ENCODE measurements at regions of chr2 and their contacts with region 1.

Region 1: DNA sequence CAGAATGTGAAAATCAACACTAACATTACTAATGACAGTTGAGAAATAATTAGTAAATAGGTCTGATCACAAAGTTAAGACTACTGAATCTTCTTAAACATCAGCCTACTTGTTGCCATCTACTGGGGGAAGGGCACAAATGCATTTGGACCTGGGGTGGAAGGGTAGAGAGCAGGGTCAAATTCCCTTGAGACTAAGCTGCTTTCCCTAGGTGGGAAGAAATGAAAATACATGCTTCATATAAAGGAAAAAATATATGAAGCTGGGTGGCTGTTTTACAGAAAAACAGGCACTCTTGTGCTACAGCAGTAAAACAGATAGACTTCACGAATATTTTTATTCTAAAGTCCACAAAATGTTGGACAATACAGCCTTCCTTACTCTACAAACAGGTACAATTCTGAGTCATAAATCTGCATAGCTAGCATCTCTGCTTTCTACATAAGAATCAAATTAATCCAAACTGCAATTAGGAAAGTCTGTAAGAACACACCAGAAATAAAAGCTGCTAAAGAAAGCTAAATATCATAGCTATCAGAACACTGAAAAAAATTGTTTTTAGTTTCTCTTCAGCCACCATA is 10.9 kb downstream of the TRIP12 start:
- DNase-seq: peak; percentile 63
- ATAC-seq: peak; percentile 79
- H3K4me3 ChIP-seq: no peak overlapping the region
- H3K4me3 Mint-ChIP-seq: peak overlapping the region; percentile 10
- H3K27ac ChIP-seq: peak overlapping the region; percentile 35 to 59
- H3K27ac Mint-ChIP-seq: peak overlapping the region; percentile 54
- H3K4me1 ChIP-seq: peaks cover 26 to 32% of the 10 kb centered on the region in 2 donors
- H3K4me1 Mint-ChIP-seq: peaks cover 54% of the 10 kb centered on the region
- H3K27me3 ChIP-seq: no peaks in the 10 kb centered on the region
- H3K27me3 Mint-ChIP-seq: no peaks in the 10 kb centered on the region
- CTCF ChIP-seq: peak; percentile 71

Region 2: DNA sequence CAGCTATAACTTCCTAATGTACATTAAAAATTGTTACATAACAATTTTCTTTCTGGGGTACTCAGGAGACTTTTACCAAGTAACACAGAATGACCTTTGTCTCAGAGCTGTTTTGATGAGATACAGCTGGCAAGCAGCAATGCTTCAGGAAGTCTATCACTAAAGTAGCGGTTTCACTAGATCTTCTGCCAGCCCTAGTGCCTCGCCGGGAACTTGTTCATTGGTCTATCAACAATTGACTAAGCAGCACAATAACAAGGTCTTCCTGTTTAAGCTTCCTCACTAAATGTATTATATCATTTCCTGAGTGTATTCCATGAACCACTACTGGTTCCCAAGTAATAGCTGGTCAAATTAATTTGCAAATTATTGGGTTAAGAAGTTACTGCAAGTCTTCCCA is 58.4 kb before region 1 on chr2:
- CTCF ChIA-PET with region 1: interaction called, 4 read pairs
- POLR2A ChIA-PET with region 1: no interaction called
- intact Hi-C with region 1: loop called (anchors 10 kb)
- DNase-seq: no peak
- ATAC-seq: no peak
- H3K4me3 ChIP-seq: no peak overlapping the region
- H3K4me3 Mint-ChIP-seq: no peak overlapping the region
- H3K27ac ChIP-seq: peak overlapping the region in 1 of 2 donors; percentile 69
- H3K27ac Mint-ChIP-seq: peak overlapping the region; percentile 46
- H3K4me1 ChIP-seq: peaks cover 16 to 20% of the 10 kb centered on the region in 2 donors
- H3K4me1 Mint-ChIP-seq: peaks cover 48% of the 10 kb centered on the region
- H3K27me3 ChIP-seq: no peaks in the 10 kb centered on the region
- H3K27me3 Mint-ChIP-seq: no peaks in the 10 kb centered on the region
- CTCF ChIP-seq: no peak

Region 3: DNA sequence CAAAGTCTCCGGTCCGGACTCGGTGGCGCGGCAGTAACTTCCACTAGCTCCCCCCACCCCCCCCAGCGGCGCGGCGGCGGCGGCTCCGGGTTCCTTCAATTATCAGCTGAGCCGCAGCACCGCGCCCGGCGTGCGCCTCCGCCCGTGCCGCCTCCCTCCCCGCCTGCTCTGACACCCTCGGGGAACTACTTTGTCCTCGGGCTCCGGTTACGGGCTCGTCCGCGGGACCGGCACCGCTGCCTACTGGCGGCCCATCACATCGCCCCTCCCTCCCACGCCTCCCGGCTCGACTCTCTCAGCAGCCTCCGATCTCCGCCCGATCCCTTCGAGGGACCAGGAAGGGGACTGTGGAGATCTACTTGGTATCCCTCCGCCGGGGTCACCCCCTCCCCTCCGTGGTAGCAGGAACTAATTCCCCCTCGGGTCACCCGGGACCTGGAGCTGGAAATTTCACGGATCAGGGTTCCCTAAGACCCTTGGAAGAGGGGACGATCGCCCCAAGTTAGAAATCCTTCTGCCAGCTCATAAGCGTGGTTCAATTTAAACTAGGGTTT is 11.0 kb after region 1 on chr2 and contains the start of gene TRIP12:
- CTCF ChIA-PET with region 1: interaction called, 13 read pairs
- POLR2A ChIA-PET with region 1: interaction called, 7 read pairs
- intact Hi-C with region 1: no loop called
- DNase-seq: peak; percentile 99
- ATAC-seq: peak; percentile 75
- H3K4me3 ChIP-seq: peak within 1 kb of the TSS; percentile 83 to 98 (median 93)
- H3K4me3 Mint-ChIP-seq: peak within 1 kb of the TSS; percentile 96
- H3K27ac ChIP-seq: peak within 1 kb of the TSS; percentile 83 to 98
- H3K27ac Mint-ChIP-seq: peak within 1 kb of the TSS; percentile 97
- H3K4me1 ChIP-seq: peaks cover 20 to 24% of the 10 kb centered on the region in 2 donors
- H3K4me1 Mint-ChIP-seq: peaks cover 39% of the 10 kb centered on the region
- H3K27me3 ChIP-seq: no peaks in the 10 kb centered on the region
- H3K27me3 Mint-ChIP-seq: no peaks in the 10 kb centered on the region
- CTCF ChIP-seq: no peak
- total RNA-seq, gene TRIP12: 254 and 274 TPM in 2 replicates

Region 4: DNA sequence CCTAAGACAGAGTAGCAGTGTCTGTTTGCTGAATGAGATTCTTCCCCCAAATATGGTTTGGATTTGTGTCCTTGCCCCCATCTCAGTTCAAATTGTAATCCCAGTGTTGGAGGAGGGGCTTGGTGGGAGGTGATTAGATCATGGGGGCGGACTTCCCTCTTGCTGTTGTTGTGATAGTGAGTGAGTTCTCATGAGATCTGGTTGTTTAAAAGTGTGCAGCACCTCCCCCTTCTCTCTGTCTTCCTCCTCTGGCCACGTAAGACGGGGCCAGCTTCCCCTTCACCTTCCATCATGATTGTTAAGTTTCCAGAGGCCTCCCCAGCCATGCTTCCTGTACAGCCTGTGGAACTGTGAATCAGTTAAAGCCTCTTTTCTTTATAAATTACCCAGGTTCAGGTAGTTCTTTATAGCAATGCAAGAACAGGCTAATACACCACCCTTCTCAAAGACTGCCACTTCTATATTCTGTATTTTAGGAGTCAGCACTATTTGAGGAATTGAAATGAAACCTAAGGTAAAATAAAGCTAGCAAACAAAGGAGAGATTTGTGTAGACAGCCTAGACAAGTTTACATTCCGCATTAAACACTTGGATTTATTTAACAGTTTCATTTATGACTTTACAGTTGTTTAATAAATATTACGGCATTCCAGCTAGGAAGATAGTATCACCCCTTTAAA is 33.0 kb after region 1 on chr2:
- CTCF ChIA-PET with region 1: no interaction called
- POLR2A ChIA-PET with region 1: no interaction called
- intact Hi-C with region 1: no loop called
- DNase-seq: no peak
- ATAC-seq: no peak
- H3K4me3 ChIP-seq: no peak overlapping the region
- H3K4me3 Mint-ChIP-seq: no peak overlapping the region
- H3K27ac ChIP-seq: no peak overlapping the region
- H3K27ac Mint-ChIP-seq: no peak overlapping the region
- H3K4me1 ChIP-seq: no peaks in the 10 kb centered on the region
- H3K4me1 Mint-ChIP-seq: peaks cover 2% of the 10 kb centered on the region
- H3K27me3 ChIP-seq: no peaks in the 10 kb centered on the region
- H3K27me3 Mint-ChIP-seq: no peaks in the 10 kb centered on the region
- CTCF ChIP-seq: no peak